Panc1 (cell line): ENCODE measurements at regions of chr11 and their contacts with region 1.

Region 1: GRCh38 chr11:107928046-107928766 is at the start of gene RAB39A:
- DNase-seq: peak; percentile 84
- ATAC-seq: peak; percentile 96
- H3K4me3 ChIP-seq: peak within 1 kb of the TSS; percentile 61 to 84
- H3K27ac ChIP-seq: peak within 1 kb of the TSS; percentile 50
- H3K4me1 ChIP-seq: peaks cover 9% of the 10 kb centered on the region; the same call in 1 of the 2 replicates
- H3K27me3 ChIP-seq: peaks cover 6% of the 10 kb centered on the region
- CTCF ChIP-seq: no peak
- total RNA-seq, gene RAB39A: 3.3 TPM

Region 2: GRCh38 chr11:106614262-106614661 is 1313.9 kb before region 1 on chr11:
- CTCF ChIA-PET with region 1: interaction called, 10 read pairs
- POLR2A ChIA-PET with region 1: no interaction called
- in situ Hi-C with region 1: no loop called
- intact Hi-C with region 1: no loop called
- DNase-seq: no peak
- ATAC-seq: no peak
- H3K4me3 ChIP-seq: no peak overlapping the region
- H3K27ac ChIP-seq: no peak overlapping the region
- H3K4me1 ChIP-seq: no peaks in the 10 kb centered on the region
- H3K27me3 ChIP-seq: no peaks in the 10 kb centered on the region
- CTCF ChIP-seq: no peak

Region 3: GRCh38 chr11:107825875-107826274 is 102.3 kb before region 1 on chr11:
- CTCF ChIA-PET with region 1: interaction called, 14 read pairs
- POLR2A ChIA-PET with region 1: no interaction called
- in situ Hi-C with region 1: no loop called
- intact Hi-C with region 1: no loop called
- DNase-seq: no peak
- ATAC-seq: no peak
- H3K4me3 ChIP-seq: no peak overlapping the region
- H3K27ac ChIP-seq: 0 out of 2 replicates have a peak overlapping the region, but pooled peaks have one; percentile 15
- H3K4me1 ChIP-seq: peaks cover 29% of the 10 kb centered on the region
- H3K27me3 ChIP-seq: no peaks in the 10 kb centered on the region
- CTCF ChIP-seq: no peak

Region 4: DNA sequence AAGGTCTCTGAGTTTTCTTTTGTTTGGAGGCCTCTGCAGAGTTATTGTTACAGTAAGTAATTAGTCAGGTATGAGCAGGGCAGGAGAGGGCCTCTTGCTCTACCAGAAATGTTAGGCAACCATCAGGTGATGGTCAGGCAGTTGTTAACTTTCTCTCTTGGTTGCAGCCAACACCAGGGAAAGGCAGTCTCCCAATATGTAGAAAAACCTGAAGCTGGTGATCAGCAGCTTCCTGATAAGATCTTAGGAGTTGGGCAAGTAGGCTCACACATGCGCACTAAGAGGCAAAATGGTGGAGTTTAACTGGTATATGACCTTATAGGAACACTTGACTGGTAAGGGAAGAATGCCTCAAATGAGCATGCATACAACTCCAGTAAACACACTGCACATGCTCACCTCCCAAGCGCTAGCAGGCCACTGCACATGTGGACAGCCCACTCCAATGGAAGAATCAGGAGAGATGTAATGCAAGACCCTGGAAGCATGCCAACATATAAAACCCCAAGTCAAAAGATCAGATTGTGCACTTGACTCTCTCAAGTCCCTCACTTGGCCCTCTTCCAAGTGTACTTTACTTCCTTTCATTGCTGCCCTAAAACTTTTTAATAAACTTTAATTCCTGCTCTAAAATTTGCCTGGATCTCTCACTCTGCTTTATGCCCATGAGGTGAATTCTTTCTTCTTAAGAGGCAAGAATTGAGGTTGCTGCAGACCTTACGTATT is 45.9 kb before region 1 on chr11:
- CTCF ChIA-PET with region 1: no interaction called
- POLR2A ChIA-PET with region 1: no interaction called
- in situ Hi-C with region 1: no loop called
- intact Hi-C with region 1: no loop called
- DNase-seq: no peak
- ATAC-seq: no peak
- H3K4me3 ChIP-seq: no peak overlapping the region
- H3K27ac ChIP-seq: no peak overlapping the region
- H3K4me1 ChIP-seq: no peaks in the 10 kb centered on the region
- H3K27me3 ChIP-seq: no peaks in the 10 kb centered on the region
- CTCF ChIP-seq: no peak

Region 5: GRCh38 chr11:107951155-107951554 is 22.9 kb after region 1 on chr11:
- CTCF ChIA-PET with region 1: no interaction called
- POLR2A ChIA-PET with region 1: interaction called, 23 read pairs
- in situ Hi-C with region 1: no loop called
- intact Hi-C with region 1: no loop called
- DNase-seq: no peak
- ATAC-seq: no peak
- H3K4me3 ChIP-seq: no peak overlapping the region
- H3K27ac ChIP-seq: no peak overlapping the region
- H3K4me1 ChIP-seq: no peaks in the 10 kb centered on the region
- H3K27me3 ChIP-seq: no peaks in the 10 kb centered on the region
- CTCF ChIP-seq: no peak

Region 6: DNA sequence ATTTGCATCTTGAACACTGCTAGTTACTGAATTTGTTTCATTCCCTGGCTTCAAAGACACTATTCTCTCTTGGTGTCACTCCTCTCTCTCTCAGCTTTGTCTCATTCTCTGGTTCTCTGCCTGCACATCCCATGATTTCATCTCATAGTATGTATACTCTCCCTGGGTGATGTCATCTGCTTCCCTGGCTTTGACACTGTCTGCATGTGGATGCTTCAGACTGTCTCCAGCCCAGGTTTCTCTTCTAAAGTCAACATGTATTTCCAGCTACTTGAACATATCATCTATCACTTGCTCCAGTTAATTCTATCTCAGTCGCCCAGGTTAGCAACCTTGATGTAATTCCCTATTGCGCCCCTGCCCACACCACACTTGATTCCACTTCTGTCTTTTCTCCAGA is 183.9 kb after region 1 on chr11:
- CTCF ChIA-PET with region 1: no interaction called
- POLR2A ChIA-PET with region 1: no interaction called
- in situ Hi-C with region 1: no loop called
- intact Hi-C with region 1: no loop called
- DNase-seq: no peak
- ATAC-seq: no peak
- H3K4me3 ChIP-seq: no peak overlapping the region
- H3K27ac ChIP-seq: no peak overlapping the region
- H3K4me1 ChIP-seq: 0 out of 2 replicates have a peak, but pooled peaks cover 2% of the 10 kb centered on the region
- H3K27me3 ChIP-seq: no peaks in the 10 kb centered on the region
- CTCF ChIP-seq: no peak